ENCODE measurements at regions of chr6 and their contacts with region 1.

Region 1: GRCh38 chr6:149043476-149044130 is 273.9 kb upstream of the TAB2 start:
- DNase-seq: peak; percentile 52
- ATAC-seq: no peak
- H3K4me3 Mint-ChIP-seq: no peak overlapping the region
- H3K27ac Mint-ChIP-seq: no peak overlapping the region
- H3K4me1 Mint-ChIP-seq: peaks cover 52% of the 10 kb centered on the region
- H3K27me3 Mint-ChIP-seq: no peaks in the 10 kb centered on the region

Region 2: GRCh38 chr6:148980234-148980633 is 63.4 kb before region 1 on chr6:
- CTCF ChIA-PET with region 1: no interaction called
- POLR2A ChIA-PET with region 1: no interaction called
- DNase-seq: no peak
- ATAC-seq: no peak
- H3K4me3 Mint-ChIP-seq: no peak overlapping the region
- H3K27ac Mint-ChIP-seq: no peak overlapping the region
- H3K4me1 Mint-ChIP-seq: no peaks in the 10 kb centered on the region
- H3K27me3 Mint-ChIP-seq: peaks cover 8% of the 10 kb centered on the region

Region 3: GRCh38 chr6:149020319-149020718 is 23.3 kb before region 1 on chr6:
- CTCF ChIA-PET with region 1: no interaction called
- POLR2A ChIA-PET with region 1: no interaction called
- DNase-seq: no peak
- ATAC-seq: no peak
- H3K4me3 Mint-ChIP-seq: no peak overlapping the region
- H3K27ac Mint-ChIP-seq: no peak overlapping the region
- H3K4me1 Mint-ChIP-seq: no peaks in the 10 kb centered on the region
- H3K27me3 Mint-ChIP-seq: no peaks in the 10 kb centered on the region

Region 4: DNA sequence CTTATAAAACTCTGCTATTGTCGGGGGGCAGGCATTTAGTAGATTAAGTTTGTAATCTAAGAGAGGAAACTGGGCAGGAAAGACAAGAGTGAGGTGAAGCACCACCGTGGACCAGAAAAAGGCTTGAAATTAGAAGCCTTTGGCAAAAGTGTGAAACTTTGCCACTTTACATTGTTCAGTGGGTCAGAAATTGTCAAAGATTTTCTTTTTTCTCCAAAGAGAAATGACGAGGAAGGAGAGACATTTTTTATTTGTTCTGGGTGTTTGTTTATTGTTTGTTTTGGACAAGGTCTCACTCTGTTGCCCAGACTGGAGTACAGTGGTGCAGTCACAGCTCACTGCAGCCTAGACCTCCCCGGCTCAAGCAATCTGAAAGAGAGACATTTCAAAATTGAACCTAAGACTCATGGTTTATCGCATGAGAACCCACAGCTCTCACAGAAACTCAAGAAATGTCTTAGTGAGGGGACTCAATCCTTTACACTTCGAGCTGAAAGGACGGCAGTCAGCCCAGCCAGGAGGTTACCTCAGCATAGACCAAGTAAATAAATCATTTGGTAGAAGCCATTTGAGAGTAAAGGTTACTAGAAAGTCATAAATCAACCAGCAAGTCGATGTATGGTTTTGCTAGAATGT is 11.1 kb after region 1 on chr6:
- CTCF ChIA-PET with region 1: interaction called, 11 read pairs
- POLR2A ChIA-PET with region 1: no interaction called
- DNase-seq: no peak
- ATAC-seq: peak; percentile 26
- H3K4me3 Mint-ChIP-seq: peak overlapping the region; percentile 12
- H3K27ac Mint-ChIP-seq: peak overlapping the region; percentile 72
- H3K4me1 Mint-ChIP-seq: peaks cover 35% of the 10 kb centered on the region
- H3K27me3 Mint-ChIP-seq: no peaks in the 10 kb centered on the region

Region 5: DNA sequence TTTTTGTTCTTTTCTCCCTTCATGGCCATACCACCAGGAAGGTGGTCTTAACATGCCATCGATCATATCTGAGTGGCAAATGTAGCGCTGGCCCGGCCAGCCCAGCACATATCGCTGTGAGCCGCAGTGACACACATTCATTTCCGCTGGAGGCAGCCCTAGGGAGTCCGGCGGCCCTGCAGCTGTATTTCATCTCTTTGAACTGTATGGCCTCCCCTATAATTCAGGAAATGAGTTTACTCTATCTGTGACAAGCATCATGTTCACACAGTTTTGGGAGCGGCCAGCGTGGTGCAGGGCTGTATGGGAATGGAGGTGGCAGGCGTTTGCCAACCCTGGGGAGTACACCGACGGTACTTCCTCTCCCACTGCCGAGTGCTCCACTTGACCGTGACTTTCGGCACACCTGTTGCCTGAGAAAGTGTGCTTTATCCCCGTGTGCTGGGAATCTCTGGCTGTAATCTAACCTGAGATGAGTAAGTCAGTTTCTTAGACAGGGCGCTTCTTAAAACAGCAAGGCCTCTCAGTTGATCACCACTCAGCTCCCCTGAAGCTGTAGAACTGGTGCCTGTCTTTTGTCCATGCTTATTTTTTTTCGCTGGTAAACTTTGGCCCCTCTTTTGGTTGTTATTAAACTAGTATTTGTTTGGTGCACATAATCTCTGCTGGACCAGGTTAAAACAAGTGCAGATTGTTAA is 16.8 kb after region 1 on chr6:
- CTCF ChIA-PET with region 1: interaction called, 19 read pairs
- POLR2A ChIA-PET with region 1: interaction called, 3 read pairs
- DNase-seq: peak; percentile 74
- ATAC-seq: peak; percentile 94
- H3K4me3 Mint-ChIP-seq: peak overlapping the region; percentile 65
- H3K27ac Mint-ChIP-seq: peak overlapping the region; percentile 91
- H3K4me1 Mint-ChIP-seq: peaks cover 45% of the 10 kb centered on the region
- H3K27me3 Mint-ChIP-seq: no peaks in the 10 kb centered on the region

Region 6: GRCh38 chr6:149065658-149066556 is 22.3 kb after region 1 on chr6:
- CTCF ChIA-PET with region 1: interaction called, 19 read pairs
- POLR2A ChIA-PET with region 1: interaction called, 8 read pairs
- DNase-seq: peak; percentile 66
- ATAC-seq: peak; percentile 92
- H3K4me3 Mint-ChIP-seq: peak overlapping the region; percentile 6
- H3K27ac Mint-ChIP-seq: peak overlapping the region; percentile 90
- H3K4me1 Mint-ChIP-seq: peaks cover 40% of the 10 kb centered on the region
- H3K27me3 Mint-ChIP-seq: no peaks in the 10 kb centered on the region